ENCODE measurements at regions of chr3 and their contacts with region 1.

Region 1: GRCh38 chr3:58874795-58875194 is 175.0 kb downstream of the CFAP20DC start:
- DNase-seq: peak; percentile 56
- ATAC-seq: peak; percentile 96
- H3K4me3 Mint-ChIP-seq: no peak overlapping the region
- H3K27ac Mint-ChIP-seq: peak overlapping the region; percentile 12
- H3K4me1 Mint-ChIP-seq: peaks cover 19% of the 10 kb centered on the region
- H3K27me3 Mint-ChIP-seq: peaks cover 14% of the 10 kb centered on the region

Region 2: GRCh38 chr3:58683466-58683865 is 191.3 kb before region 1 on chr3:
- CTCF ChIA-PET with region 1: no interaction called
- POLR2A ChIA-PET with region 1: no interaction called
- intact Hi-C with region 1: loop called in 1 of 2 experiments (anchors 1 kb)
- DNase-seq: peak; percentile 65
- ATAC-seq: peak; percentile 68
- H3K4me3 Mint-ChIP-seq: no peak overlapping the region
- H3K27ac Mint-ChIP-seq: no peak overlapping the region
- H3K4me1 Mint-ChIP-seq: peaks cover 11% of the 10 kb centered on the region
- H3K27me3 Mint-ChIP-seq: peaks cover 27% of the 10 kb centered on the region

Region 3: DNA sequence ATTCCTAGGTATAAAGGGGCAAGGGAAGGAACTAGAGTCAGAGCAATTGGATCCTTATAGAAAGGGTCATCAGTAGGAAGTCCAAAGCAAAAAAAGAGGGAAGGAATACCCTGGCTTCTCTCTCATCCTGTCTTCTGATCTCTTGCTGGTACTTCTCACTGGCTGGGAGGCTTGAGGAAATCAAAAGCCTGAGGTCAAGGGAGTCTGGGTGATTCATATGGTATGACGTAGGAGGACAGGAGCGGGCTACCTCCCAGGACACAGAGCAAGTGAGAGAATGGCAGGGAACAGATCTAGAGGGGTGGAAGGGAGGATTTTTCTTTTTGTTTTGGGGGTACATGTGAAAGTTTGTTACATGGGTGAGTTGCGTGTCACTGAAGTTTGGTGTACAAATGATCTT is 99.0 kb after region 1 on chr3:
- CTCF ChIA-PET with region 1: no interaction called
- POLR2A ChIA-PET with region 1: no interaction called
- intact Hi-C with region 1: no loop called
- DNase-seq: no peak
- ATAC-seq: no peak
- H3K4me3 Mint-ChIP-seq: no peak overlapping the region
- H3K27ac Mint-ChIP-seq: no peak overlapping the region
- H3K4me1 Mint-ChIP-seq: no peaks in the 10 kb centered on the region
- H3K27me3 Mint-ChIP-seq: peaks cover 14% of the 10 kb centered on the region

Region 4: GRCh38 chr3:58994746-58995330 is 120.0 kb after region 1 on chr3:
- CTCF ChIA-PET with region 1: no interaction called
- POLR2A ChIA-PET with region 1: no interaction called
- intact Hi-C with region 1: loop called in 1 of 2 experiments (anchors 1 kb)
- DNase-seq: peak; percentile 47
- ATAC-seq: no peak
- H3K4me3 Mint-ChIP-seq: no peak overlapping the region
- H3K27ac Mint-ChIP-seq: no peak overlapping the region
- H3K4me1 Mint-ChIP-seq: peaks cover 7% of the 10 kb centered on the region
- H3K27me3 Mint-ChIP-seq: peaks cover 5% of the 10 kb centered on the region

Measured in activated CD4-positive, alpha-beta T cell treated with anti-CD3 and anti-CD28 coated beads for 36 hours (primary cell).